ENCODE measurements at regions of chr11 and their contacts with region 1.

Region 1: DNA sequence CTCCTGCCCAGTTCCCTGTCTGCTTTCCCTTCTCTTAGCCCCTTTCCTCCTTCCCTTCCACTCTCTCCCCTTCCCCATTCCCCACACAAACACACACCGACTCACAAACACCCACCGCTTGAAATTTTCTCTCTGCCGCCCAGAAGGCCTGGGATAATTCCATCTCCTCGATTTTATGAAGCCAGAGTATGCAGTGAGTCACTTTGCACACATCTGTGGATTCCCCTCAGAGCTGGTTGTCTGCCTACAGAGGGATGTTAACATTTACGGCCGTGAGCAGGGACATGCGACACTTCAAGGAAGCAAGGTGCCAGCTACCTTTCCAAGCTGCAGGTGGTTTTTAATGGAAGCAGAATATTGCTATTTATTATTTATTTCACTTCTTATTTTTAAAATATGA is 332.0 kb downstream of the TENM4 start:
- DNase-seq: no peak

Region 2: GRCh38 chr11:77968337-77968736 is 1140.5 kb before region 1 on chr11:
- intact Hi-C with region 1: loop called in 1 of 2 experiments (anchors 5 kb)
- DNase-seq: no peak

Region 3: GRCh38 chr11:79570104-79570503 is 461.3 kb after region 1 on chr11:
- intact Hi-C with region 1: no loop called
- DNase-seq: no peak

Region 4: DNA sequence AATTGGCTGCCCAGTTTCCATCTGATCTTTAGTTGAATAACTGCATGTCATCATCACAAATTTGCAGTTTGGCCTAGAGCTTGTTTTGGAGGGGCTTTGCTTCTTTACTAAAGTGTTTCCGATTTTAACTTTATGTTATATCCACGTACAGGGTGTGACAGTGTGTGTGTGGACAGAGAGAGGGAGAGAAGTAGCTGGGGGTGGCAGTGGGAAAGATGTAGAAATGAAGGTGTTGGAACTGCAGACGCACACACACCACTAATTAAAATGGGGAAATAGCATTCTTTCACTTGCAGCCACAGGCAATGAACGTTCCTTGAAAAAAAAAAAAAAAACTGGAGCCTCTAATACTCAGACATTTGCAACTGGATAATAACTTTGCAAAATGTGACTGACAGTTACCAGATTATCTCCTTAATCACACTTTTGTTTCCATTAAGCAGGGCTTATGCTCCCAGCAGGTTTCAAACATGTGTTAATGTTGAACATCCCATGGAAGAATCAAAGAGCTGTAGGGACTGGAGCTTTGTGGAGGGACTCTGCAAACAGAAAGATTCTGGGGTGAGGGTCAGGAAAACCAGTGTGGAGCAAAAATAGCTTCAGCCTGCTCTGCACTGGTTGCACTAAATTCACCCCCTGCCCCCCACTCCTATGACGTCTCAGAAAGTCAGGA is 570.1 kb after region 1 on chr11:
- intact Hi-C with region 1: no loop called
- DNase-seq: no peak

Measured in posterior vena cava (tissue), 2 donors.